CD4-positive, alpha-beta memory T cell (primary cell): ENCODE measurements at regions of chr2 and their contacts with region 1.

Region 1: DNA sequence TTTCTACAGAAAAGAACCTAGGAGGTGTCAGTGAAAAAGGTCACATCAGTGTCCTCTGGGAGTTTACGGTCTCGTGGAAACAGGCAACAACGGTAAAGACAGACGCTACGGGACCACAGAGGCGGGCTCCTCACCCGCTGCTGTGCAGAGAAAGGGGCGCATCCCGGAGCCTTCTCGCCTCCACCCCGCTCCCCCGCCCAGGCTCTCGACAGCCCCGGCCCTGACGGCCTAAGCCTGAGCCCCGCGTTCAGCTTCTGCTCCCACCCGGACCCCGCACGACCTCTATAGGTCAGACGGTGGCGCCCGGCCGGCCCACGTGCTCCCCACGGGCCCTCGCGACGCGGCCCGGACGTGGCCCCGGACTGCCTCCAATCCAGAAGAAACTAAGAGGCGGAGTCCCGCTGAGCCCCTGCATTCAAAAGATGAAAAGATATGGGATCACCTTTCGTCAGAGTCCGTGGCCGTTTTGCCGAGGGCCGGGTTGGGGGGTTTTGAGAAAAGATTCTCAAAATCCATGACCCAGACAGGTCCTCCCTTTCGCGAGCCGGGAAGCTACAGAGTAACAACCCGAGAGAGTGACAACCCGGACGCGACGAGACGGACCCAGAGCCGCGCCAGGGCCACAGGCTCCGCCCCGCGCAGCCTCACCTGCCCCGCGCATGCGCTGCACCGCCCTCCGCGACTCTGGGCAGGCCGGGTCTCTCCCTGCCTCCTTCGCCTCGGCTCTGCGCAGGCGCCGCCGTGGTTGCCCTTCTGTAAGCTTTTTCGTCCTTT is at the start of gene ZC3H8:
- DNase-seq: peak; percentile 93 to 96 (median 96)
- H3K4me3 ChIP-seq: peak within 1 kb of the TSS; percentile 75 to 96
- H3K4me3 Mint-ChIP-seq: peak within 1 kb of the TSS; percentile 88 to 93 (median 91)
- H3K27ac ChIP-seq: peak within 1 kb of the TSS; percentile 92
- H3K27ac Mint-ChIP-seq: peak within 1 kb of the TSS; percentile 87 to 97 (median 96)
- H3K4me1 ChIP-seq: peaks cover 35% of the 10 kb centered on the region
- H3K4me1 Mint-ChIP-seq: peaks cover 5 to 23% (median 15%) of the 10 kb centered on the region in 4 donors
- H3K27me3 ChIP-seq: no peaks in the 10 kb centered on the region
- H3K27me3 Mint-ChIP-seq: no peaks in the 10 kb centered on the region
- total RNA-seq, gene ZC3H8: 17.9 to 18.9 TPM

Region 2: GRCh38 chr2:111883661-111884591 is 370.7 kb before region 1 on chr2 and contains the start of gene ANAPC1:
- CTCF ChIA-PET with region 1: no interaction called
- POLR2A ChIA-PET with region 1: no interaction called
- intact Hi-C with region 1: loop called (anchors 2 kb)
- DNase-seq: peak; percentile 81 to 87 (median 84)
- H3K4me3 ChIP-seq: peak within 1 kb of the TSS; percentile 77
- H3K4me3 Mint-ChIP-seq: peak within 1 kb of the TSS; percentile 90 to 96 (median 93)
- H3K27ac ChIP-seq: peak within 1 kb of the TSS; percentile 82
- H3K27ac Mint-ChIP-seq: peak within 1 kb of the TSS; percentile 85 to 99 (median 96)
- H3K4me1 ChIP-seq: peaks cover 15% of the 10 kb centered on the region
- H3K4me1 Mint-ChIP-seq: peaks cover 4 to 12% (median 10%) of the 10 kb centered on the region in 4 donors
- H3K27me3 ChIP-seq: no peaks in the 10 kb centered on the region
- H3K27me3 Mint-ChIP-seq: no peaks in the 10 kb centered on the region
- total RNA-seq, gene ANAPC1: 58.1 to 60.2 TPM

Region 3: GRCh38 chr2:112181571-112182290 is 72.9 kb before region 1 on chr2:
- CTCF ChIA-PET with region 1: interaction called, 17 read pairs
- POLR2A ChIA-PET with region 1: interaction called, 44 read pairs
- intact Hi-C with region 1: no loop called
- DNase-seq: peak; percentile 72 to 79 (median 76)
- H3K4me3 ChIP-seq: peak overlapping the region; percentile 71 to 77
- H3K4me3 Mint-ChIP-seq: peak overlapping the region; percentile 87 to 94 (median 90)
- H3K27ac ChIP-seq: peak overlapping the region; percentile 72
- H3K27ac Mint-ChIP-seq: peak overlapping the region; percentile 93 to 98 (median 96)
- H3K4me1 ChIP-seq: peaks cover 54% of the 10 kb centered on the region
- H3K4me1 Mint-ChIP-seq: peaks cover 38 to 78% (median 60%) of the 10 kb centered on the region in 4 donors
- H3K27me3 ChIP-seq: no peaks in the 10 kb centered on the region
- H3K27me3 Mint-ChIP-seq: no peaks in the 10 kb centered on the region

Region 4: DNA sequence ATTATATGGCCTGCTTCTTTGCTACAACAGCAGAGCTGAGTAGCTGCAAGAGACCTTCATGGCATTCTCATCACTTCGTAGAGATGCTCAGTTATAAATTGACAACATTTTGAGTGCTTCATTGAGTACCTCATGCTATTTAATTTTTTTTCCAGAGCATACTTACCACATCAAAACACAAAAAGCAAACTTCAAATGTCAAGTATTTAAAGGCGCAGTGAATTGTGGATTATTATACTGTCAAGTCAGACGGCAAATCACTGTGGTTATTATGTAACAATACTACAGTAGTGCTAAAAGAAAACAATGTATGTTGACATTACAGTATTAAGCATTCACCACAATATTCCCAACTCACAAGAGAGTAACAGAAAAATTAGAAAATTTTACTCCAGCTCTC is 12.3 kb before region 1 on chr2:
- CTCF ChIA-PET with region 1: interaction called, 16 read pairs
- POLR2A ChIA-PET with region 1: interaction called, 10 read pairs
- intact Hi-C with region 1: no loop called
- DNase-seq: no peak
- H3K4me3 ChIP-seq: no peak overlapping the region
- H3K4me3 Mint-ChIP-seq: peak overlapping the region in 2 of 8 donors; percentile 24 to 43
- H3K27ac ChIP-seq: no peak overlapping the region
- H3K27ac Mint-ChIP-seq: peak overlapping the region in 4 of 7 donors; percentile 25 to 59 (median 36)
- H3K4me1 ChIP-seq: peaks cover 11% of the 10 kb centered on the region
- H3K4me1 Mint-ChIP-seq: peaks cover 19 to 32% (median 20%) of the 10 kb centered on the region in 4 donors
- H3K27me3 ChIP-seq: no peaks in the 10 kb centered on the region
- H3K27me3 Mint-ChIP-seq: no peaks in the 10 kb centered on the region

Region 5: DNA sequence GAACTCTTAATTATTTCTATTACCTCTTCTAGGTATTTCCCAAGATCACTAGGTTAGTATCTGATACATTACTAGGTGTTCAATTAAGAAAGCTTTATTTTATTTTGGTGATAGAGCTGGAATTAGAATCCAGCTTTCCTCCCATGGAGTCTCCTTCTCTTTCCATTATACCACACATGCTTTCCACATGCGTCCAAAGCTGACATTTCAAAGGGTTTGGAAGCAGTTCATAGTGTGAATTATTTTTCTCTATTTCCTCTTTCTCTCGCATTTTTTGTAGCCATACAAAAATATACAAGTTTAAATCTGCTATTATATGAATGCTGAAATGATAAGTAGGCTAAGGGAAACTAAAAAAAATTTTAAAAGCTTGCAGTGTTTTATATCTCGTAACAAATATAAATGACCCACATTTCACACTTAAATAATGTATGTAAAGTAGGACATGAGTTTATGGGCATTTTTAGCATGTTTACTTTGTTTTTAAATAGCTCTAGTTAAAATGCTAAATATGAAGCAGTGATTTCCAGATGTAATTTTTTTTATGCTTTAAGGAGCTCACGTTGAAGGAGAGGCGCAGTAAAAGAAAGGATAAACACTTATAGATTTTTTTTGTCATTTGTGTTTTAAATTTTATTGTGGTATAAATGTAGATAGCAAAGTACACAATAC is 40.9 kb after region 1 on chr2:
- CTCF ChIA-PET with region 1: no interaction called
- POLR2A ChIA-PET with region 1: no interaction called
- intact Hi-C with region 1: loop called (anchors 5 kb)
- DNase-seq: no peak
- H3K4me3 ChIP-seq: no peak overlapping the region
- H3K4me3 Mint-ChIP-seq: no peak overlapping the region
- H3K27ac ChIP-seq: no peak overlapping the region
- H3K27ac Mint-ChIP-seq: peak overlapping the region in 1 of 7 donors; percentile 2
- H3K4me1 ChIP-seq: no peaks in the 10 kb centered on the region
- H3K4me1 Mint-ChIP-seq: peaks cover 6 to 19% (median 13%) of the 10 kb centered on the region in 4 donors
- H3K27me3 ChIP-seq: no peaks in the 10 kb centered on the region
- H3K27me3 Mint-ChIP-seq: no peaks in the 10 kb centered on the region

Region 6: DNA sequence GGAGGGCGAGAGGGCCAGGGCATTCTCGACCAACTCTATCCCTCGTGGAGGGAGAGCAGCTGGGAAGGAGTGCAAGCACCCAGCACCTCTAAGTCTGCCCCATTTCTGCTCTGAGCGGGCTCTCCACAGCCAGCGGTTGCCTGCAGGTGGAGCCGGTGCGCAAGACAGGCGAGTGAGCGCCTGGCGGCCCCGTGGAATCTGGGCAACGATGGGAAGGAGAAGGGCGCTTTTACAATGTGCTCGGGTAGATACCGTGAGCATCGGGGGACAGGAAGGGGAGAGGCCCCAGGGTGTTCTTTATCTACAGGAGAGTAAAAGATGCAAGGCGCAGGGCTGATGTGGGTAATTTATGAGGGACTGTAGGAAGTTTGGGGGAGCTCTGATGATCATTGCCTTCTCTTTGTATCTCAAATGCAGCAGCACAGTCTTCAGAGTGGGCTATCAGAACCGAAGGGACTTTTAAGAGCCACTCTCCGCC is 226.4 kb after region 1 on chr2:
- CTCF ChIA-PET with region 1: no interaction called
- POLR2A ChIA-PET with region 1: no interaction called
- intact Hi-C with region 1: loop called (anchors 10 kb)
- DNase-seq: peak; percentile 77 to 86 (median 82)
- H3K4me3 ChIP-seq: peak overlapping the region; percentile 63 to 78
- H3K4me3 Mint-ChIP-seq: peak overlapping the region; percentile 89 to 99 (median 96)
- H3K27ac ChIP-seq: peak overlapping the region; percentile 62
- H3K27ac Mint-ChIP-seq: peak overlapping the region; percentile 84 to 97 (median 95)
- H3K4me1 ChIP-seq: peaks cover 26% of the 10 kb centered on the region
- H3K4me1 Mint-ChIP-seq: peaks cover 17 to 39% (median 25%) of the 10 kb centered on the region in 4 donors
- H3K27me3 ChIP-seq: no peaks in the 10 kb centered on the region
- H3K27me3 Mint-ChIP-seq: no peaks in the 10 kb centered on the region

Region 7: GRCh38 chr2:112658820-112659667 is 404.4 kb after region 1 on chr2:
- CTCF ChIA-PET with region 1: no interaction called
- POLR2A ChIA-PET with region 1: no interaction called
- intact Hi-C with region 1: no loop called
- DNase-seq: no peak
- H3K4me3 ChIP-seq: no peak overlapping the region
- H3K4me3 Mint-ChIP-seq: peak overlapping the region in 1 of 8 donors; percentile 52
- H3K27ac ChIP-seq: no peak overlapping the region
- H3K27ac Mint-ChIP-seq: peak overlapping the region; percentile 61 to 84 (median 72)
- H3K4me1 ChIP-seq: peaks cover 32% of the 10 kb centered on the region
- H3K4me1 Mint-ChIP-seq: peaks cover 28 to 66% (median 37%) of the 10 kb centered on the region in 4 donors
- H3K27me3 ChIP-seq: no peaks in the 10 kb centered on the region
- H3K27me3 Mint-ChIP-seq: no peaks in the 10 kb centered on the region